ENCODE measurements at regions of chr7 and their contacts with region 1.

Region 1: GRCh38 chr7:130712416-130712815 is 21.6 kb downstream of the KLF14 start:
- DNase-seq: no peak
- ATAC-seq: no peak
- H3K4me3 ChIP-seq: no peak overlapping the region
- H3K27ac ChIP-seq: no peak overlapping the region
- H3K4me1 ChIP-seq: no peaks in the 10 kb centered on the region
- H3K27me3 ChIP-seq: peaks cover 34% of the 10 kb centered on the region
- CTCF ChIP-seq: no peak
- POLR2A ChIP-seq: no peak
- RAD21 ChIP-seq: no peak

Region 2: GRCh38 chr7:129845972-129846327 is 866.5 kb before region 1 on chr7:
- CTCF ChIA-PET with region 1: no interaction called
- POLR2A ChIA-PET with region 1: no interaction called
- dilution Hi-C with region 1: no loop called
- in situ Hi-C with region 1: no loop called
- intact Hi-C with region 1: no loop called
- DNase-seq: peak; percentile 91
- ATAC-seq: peak; percentile 78
- H3K4me3 ChIP-seq: no peak overlapping the region
- H3K27ac ChIP-seq: no peak overlapping the region
- H3K4me1 ChIP-seq: peaks cover 14% of the 10 kb centered on the region
- H3K27me3 ChIP-seq: no peaks in the 10 kb centered on the region
- CTCF ChIP-seq: no peak
- POLR2A ChIP-seq: no peak
- RAD21 ChIP-seq: no peak

Region 3: GRCh38 chr7:130611218-130611617 is 101.2 kb before region 1 on chr7:
- CTCF ChIA-PET with region 1: no interaction called
- POLR2A ChIA-PET with region 1: no interaction called
- dilution Hi-C with region 1: no loop called
- in situ Hi-C with region 1: no loop called
- intact Hi-C with region 1: loop called (anchors 5 kb)
- DNase-seq: no peak
- ATAC-seq: no peak
- H3K4me3 ChIP-seq: no peak overlapping the region
- H3K27ac ChIP-seq: no peak overlapping the region
- H3K4me1 ChIP-seq: no peaks in the 10 kb centered on the region
- H3K27me3 ChIP-seq: no peaks in the 10 kb centered on the region
- CTCF ChIP-seq: no peak
- POLR2A ChIP-seq: no peak
- RAD21 ChIP-seq: no peak